ENCODE measurements at regions of chr11 and their contacts with region 1.

Region 1: DNA sequence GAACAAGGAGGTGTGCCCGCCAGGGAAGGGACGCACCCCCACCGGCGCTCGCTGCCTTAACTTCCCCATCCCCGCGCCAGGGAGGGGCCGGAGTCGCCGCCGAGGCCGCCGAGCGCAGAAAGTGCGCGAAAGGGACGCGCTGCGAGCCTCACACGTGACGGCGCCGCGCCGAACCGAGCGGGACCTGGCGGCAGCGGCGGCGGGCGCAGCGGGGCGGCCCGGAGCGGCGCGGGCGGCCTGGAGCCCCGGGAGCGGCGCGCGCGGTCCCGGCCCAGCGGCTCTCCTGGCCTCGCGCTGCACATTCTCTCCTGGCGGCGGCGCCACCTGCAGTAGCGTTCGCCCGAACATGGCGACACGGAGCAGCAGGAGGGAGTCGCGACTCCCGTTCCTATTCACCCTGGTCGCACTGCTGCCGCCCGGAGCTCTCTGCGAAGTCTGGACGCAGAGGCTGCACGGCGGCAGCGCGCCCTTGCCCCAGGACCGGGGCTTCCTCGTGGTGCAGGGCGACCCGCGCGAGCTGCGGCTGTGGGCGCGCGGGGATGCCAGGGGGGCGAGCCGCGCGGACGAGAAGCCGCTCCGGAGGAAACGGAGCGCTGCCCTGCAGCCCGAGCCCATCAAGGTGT is at the start of gene SORL1:
- DNase-seq: peak; percentile 83
- H3K4me3 Mint-ChIP-seq: peak within 1 kb of the TSS; percentile 84
- H3K27ac Mint-ChIP-seq: peak within 1 kb of the TSS; percentile 94
- H3K4me1 Mint-ChIP-seq: peaks cover 85% of the 10 kb centered on the region
- H3K27me3 Mint-ChIP-seq: no peaks in the 10 kb centered on the region

Region 2: DNA sequence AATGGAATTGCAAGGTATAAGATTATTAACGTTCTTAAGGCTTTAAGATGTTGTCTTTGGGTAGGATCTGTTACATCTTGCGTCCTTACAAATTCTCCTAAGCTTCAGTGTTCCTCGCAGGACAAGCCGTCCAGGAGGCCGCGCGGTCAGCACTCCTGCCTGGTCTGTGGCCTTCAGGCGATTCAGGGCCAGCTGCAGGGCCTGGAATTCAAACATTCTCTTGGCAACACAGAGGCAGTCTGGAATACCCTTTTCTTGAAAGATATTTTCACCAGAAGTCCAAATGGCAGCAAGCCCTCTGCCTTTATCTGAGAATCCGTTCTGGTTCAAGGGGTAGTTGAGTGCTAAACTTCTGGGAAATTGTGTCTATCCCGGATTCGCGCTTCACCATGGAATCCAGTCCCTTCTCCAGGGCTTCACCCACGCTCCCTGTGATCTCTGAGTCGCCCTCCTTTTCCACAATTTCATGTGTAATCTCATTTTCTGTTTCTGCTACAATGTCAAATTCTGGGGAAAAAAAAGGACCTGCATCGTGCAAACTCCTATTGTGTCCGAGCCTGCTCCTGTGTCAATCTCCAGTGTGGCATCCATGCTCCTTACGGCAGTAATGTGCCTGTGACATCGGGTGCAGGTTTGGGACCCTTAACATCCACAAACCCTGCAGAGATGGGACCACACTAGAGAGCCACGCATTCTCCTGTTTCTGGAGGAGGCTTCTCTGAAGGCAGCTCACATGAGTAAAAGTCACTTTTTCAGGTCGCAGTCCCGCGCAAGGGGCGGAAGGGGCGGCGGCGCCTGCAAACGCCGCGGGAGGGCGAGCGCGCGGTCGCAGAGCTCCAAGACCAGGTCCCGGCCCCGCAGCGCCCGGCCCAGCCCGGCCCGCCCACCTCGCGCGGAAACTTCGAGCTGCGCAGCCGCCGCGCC is 25.4 kb before region 1 on chr11:
- CTCF ChIA-PET with region 1: interaction called, 14 read pairs
- DNase-seq: peak; percentile 67
- H3K4me3 Mint-ChIP-seq: peak overlapping the region; percentile 40
- H3K27ac Mint-ChIP-seq: no peak overlapping the region
- H3K4me1 Mint-ChIP-seq: peaks cover 42% of the 10 kb centered on the region
- H3K27me3 Mint-ChIP-seq: peaks cover 10% of the 10 kb centered on the region

Region 3: DNA sequence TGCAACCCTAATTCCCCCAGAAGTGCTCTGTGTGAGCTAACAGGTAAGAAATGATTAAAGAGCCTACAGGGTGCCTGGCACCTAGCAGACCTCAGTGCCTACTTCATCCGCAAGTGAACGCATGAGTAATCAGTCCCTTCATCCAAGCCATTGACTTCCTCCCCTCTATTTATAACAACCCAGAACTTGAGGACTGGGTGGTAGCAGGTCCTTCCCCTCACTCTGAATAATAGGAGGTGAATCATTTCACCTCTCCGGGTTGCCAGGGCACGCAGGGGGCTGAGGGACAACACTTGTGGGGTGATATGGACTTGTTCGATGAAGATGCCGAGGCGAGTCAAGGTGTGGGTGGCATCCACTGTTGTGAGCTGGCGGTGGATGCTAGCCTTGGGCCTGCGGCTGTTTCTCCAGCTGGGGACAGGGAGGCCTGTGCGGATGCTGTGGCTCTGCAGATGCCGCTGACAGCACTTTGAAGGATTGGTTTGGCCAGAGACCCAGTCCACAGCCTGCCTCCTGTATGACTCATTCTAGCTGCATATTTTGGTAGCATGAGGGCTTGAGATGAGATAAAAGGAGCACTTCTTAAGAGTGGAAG is 12.4 kb after region 1 on chr11:
- CTCF ChIA-PET with region 1: interaction called, 63 read pairs
- DNase-seq: peak; percentile 84
- H3K4me3 Mint-ChIP-seq: peak overlapping the region; percentile 45
- H3K27ac Mint-ChIP-seq: peak overlapping the region; percentile 95
- H3K4me1 Mint-ChIP-seq: peaks cover 99% of the 10 kb centered on the region
- H3K27me3 Mint-ChIP-seq: no peaks in the 10 kb centered on the region